HEK293T (cell line): ENCODE measurements at regions of chr5 and their contacts with region 1.

Region 1: DNA sequence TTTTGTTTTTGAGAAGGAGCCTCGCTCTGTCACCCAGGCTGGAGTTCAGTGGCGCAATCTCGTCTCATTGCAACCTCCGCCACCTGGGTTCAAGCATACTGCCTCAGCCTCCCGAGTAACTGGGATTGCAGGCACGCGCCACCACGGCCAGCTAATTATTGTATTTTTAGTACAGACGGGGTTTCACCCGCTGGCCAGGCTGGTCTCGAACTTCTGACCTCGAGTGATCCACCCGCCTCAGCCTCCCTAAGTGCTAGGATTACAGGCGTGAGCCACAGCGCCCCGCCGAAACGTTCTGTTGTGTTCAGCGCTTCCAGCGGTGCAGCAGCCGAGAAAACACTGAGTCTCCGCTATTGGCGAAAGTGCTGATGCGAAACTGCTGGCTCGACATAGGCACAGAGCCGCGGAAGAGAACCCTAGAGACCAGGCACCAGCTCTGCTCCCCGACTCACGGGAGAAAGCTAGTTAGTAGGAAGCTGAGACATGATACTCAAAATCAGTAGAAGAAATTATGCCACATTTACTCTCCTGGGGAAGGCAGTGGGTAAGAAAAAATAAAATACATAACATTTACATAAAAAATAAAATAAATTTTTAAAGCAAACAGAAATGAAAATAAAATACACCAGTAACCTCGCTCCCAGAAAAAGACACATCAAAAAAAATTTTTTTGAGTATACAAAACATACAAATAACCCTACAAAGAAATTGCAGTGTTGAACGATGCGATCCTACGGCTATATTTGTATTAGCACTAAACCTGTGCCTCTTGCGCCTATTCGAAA is 31.6 kb downstream of the ANXA2R start:
- DNase-seq: no peak

Region 2: DNA sequence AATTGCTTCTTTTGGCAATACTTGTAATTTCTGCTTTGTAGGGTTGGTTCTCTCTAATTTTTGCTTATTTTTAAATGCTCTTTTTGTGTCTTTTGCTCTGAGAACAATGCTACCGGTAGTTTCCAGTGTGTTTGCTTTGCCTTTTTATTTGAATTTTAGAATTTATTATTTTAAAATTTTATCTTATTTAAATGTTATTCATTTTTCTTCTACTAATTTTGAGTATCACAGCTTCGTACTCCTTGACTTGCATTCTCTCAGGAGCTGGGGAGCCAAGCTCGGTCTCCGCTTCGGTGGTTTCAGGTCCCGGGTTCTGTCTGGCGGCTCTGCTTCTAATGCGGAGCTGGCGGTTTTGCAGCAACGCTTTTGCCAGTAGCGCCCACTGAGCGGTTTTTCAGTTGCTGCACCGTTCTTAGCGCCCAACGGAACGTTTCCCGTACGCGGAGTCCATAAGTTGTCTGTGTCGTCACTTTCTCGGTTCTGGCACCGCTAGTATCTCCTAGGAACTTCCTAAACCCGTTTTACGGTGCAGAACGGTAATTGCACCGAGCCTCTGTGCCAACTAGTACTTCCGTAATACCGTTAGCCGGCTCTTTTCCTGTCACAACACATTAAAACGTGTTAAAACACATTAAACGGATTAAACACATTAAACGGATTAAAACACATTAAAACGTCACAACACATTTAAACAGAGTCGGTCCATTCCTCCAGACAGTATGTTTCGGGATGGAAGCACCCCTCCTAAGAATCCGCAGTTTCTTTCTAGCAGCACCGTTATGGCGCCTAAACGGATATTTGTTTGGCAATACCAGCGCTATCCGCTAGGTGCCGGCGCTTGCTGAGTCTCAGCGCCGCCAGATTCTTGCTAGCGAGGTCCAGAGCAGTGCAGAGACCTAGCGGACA is 14.1 kb before region 1 on chr5:
- CTCF ChIA-PET with region 1: interaction called, 5 read pairs
- POLR2A ChIA-PET with region 1: interaction called, 11 read pairs
- DNase-seq: peak; percentile 75

Region 3: GRCh38 chr5:43066799-43067741 is 58.5 kb after region 1 on chr5:
- CTCF ChIA-PET with region 1: interaction called, 3 read pairs
- POLR2A ChIA-PET with region 1: interaction called, 11 read pairs
- DNase-seq: peak; percentile 41